RWPE1 (cell line): ENCODE measurements at regions of chr12 and their contacts with region 1.

Region 1: DNA sequence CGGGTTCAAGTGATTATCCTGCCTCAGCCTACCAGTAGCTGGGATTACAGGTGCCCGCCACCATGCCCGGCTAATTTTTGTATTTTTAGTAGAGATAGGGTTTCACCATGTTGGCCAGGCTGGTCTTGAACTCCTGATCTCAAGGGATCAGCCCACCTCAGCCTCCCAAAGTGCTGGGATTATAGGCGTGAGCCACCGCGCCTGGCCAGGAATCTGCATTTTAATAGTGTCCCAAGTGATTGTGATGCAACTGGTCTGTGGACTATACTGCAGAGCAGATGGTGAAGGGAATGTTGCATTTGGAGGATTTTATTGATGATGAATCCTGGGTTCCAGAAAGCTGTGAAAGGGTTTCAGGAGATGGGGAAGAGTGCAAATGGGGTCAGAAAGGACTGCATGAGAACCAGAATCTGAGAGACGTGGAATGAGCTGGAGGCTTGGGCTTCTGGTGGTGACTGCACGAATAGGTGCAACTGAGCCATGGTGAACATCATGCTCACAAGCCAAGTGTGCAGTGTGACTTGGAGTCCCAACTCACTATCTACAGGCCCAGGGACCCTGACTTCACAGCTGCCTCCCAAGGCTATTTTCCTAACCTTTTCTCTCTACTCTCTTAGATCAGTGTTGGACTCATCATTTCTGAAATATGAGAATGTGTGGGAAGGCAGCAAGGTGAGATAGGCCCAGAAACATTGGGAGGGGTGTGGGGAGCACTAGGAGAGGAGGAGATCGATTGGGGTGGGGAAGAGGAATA is 4.5 kb downstream of the RPS26 start:
- DNase-seq: no peak
- H3K27ac ChIP-seq: peak overlapping the region; percentile 65
- CTCF ChIP-seq: no peak

Region 2: DNA sequence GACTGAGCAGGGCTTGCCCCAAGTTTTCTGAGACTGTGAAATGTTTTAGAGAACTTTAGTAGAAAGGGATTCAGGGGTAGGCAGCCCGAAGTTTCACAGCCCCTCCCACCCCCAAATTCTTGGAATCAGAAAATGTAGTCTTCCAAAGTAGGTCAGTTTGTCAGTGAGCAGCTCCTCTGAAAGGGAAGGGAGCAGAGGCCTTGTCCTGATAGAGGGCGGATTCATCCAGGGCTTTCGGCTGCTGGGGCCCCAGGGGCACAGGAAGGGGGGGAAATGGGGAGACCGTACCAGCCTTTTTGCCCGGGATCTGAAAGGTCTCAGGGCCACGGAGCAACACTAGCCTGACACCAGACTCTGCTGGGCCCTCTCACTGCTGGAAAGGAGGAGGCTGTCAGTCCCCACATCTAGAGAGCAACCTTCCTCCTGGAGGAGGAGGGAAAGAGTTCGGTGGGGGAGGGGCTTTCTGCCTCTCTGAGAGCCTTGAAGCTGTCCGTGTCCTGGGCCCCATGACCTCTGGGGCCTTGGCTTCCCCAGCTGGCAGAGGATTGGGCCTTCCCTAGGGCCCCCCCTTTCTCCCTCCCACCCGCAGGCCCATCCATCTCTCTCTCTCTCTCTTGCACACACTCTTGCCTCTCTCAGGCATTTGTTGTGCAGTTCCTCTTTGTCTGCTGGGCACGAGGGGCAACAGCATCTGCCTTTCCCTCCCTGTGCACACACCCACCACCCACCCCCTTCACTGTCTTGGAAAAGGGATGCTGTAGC is 25.6 kb before region 1 on chr12 and contains the start of gene IKZF4:
- CTCF ChIA-PET with region 1: no interaction called
- POLR2A ChIA-PET with region 1: no interaction called
- DNase-seq: no peak
- H3K27ac ChIP-seq: no peak within 1 kb of the TSS; the same call in 1 of the 2 replicates
- CTCF ChIP-seq: no peak

Region 3: DNA sequence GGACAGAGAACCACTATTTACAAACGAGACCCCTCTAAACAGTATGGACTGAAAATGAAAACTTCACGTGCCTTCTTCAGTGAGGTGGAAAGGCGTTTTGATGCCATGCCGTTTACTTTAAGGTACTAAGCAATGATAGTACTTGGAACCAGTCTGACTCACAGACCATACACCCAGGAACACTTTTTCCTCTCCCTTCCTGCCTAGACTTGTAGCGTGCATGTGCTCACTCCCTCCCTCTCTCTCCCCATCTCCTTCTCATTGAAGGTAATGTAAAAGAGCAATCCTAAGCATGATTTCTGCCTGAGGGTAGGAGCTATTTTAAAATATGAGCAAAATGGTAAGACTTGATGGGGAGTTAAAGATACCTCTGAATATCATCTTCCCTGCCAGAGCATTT is 64.4 kb after region 1 on chr12:
- CTCF ChIA-PET with region 1: interaction called, 11 read pairs
- POLR2A ChIA-PET with region 1: no interaction called
- DNase-seq: peak; percentile 65
- H3K27ac ChIP-seq: peak overlapping the region; percentile 79
- CTCF ChIP-seq: no peak

Region 4: GRCh38 chr12:56224102-56224701 is 178.0 kb after region 1 on chr12 and contains the start of gene NABP2:
- CTCF ChIA-PET with region 1: no interaction called
- POLR2A ChIA-PET with region 1: no interaction called
- DNase-seq: peak; percentile 100
- H3K27ac ChIP-seq: peak within 1 kb of the TSS; percentile 97
- CTCF ChIP-seq: peak; percentile 99